HEK293 (cell line): ENCODE measurements at regions of chr20 and their contacts with region 1.

Region 1: GRCh38 chr20:44518248-44518647 is 3.6 kb downstream of the SERINC3 start:
- H3K4me3 ChIP-seq: no peak overlapping the region
- H3K27ac ChIP-seq: no peak overlapping the region
- H3K4me1 ChIP-seq: peaks cover 14% of the 10 kb centered on the region
- CTCF ChIP-seq: no peak

Region 2: GRCh38 chr20:44566811-44567210 is 48.6 kb after region 1 on chr20:
- CTCF ChIA-PET with region 1: no interaction called
- POLR2A ChIA-PET with region 1: interaction called, 14 read pairs
- H3K4me3 ChIP-seq: no peak overlapping the region
- H3K27ac ChIP-seq: no peak overlapping the region
- H3K4me1 ChIP-seq: no peaks in the 10 kb centered on the region
- CTCF ChIP-seq: no peak